ENCODE measurements at regions of chr6 and their contacts with region 1.

Region 1: DNA sequence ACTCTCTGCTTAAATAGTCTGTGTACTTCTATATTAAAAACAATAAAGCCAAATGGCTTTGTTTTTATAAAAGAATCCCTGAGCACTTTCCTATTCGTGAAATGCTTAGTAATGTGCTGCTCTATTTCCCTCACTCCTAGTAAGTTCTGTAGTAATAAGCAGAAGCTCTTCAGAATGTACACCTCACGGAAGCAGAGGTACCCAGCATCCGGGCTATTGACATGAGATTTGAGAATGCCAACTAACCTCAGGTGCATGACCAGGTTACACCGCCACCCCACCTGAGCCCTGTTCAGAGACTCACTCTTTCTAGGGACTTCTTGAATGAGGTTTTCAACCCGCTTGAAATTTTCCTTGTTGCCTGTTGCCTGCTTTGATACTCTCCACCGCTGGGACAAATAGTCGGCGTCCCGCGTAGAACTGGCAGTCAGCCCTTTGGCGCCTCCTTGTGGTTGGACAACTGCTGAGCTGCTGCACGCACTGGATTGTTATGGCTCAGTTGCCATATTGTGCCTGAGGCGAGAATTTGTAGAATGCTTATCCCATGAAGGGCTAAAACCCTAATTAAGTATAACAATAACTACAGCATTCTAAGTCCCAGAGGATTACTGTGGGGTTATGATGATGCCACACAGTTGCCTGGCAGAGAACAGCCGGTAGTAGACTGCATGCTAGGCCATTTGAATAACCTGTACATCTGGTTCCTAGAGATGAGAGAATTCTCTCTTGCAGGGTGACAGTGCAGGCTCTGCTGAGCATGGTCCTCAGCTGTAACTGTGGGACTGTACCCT is 95.4 kb downstream of the KHDC1L start:
- DNase-seq: peak; percentile 93
- H3K4me3 ChIP-seq: no peak overlapping the region
- H3K27ac ChIP-seq: no peak overlapping the region
- H3K4me1 ChIP-seq: peaks cover 25% of the 10 kb centered on the region
- H3K27me3 ChIP-seq: no peaks in the 10 kb centered on the region
- CTCF ChIP-seq: peak; percentile 99

Region 2: GRCh38 chr6:72411872-72412708 is 717.8 kb before region 1 on chr6:
- CTCF ChIA-PET with region 1: interaction called, 4 read pairs
- POLR2A ChIA-PET with region 1: no interaction called
- intact Hi-C with region 1: loop called (anchors 5 kb)
- DNase-seq: peak; percentile 85
- H3K4me3 ChIP-seq: no peak overlapping the region
- H3K27ac ChIP-seq: no peak overlapping the region
- H3K4me1 ChIP-seq: no peaks in the 10 kb centered on the region
- H3K27me3 ChIP-seq: no peaks in the 10 kb centered on the region
- CTCF ChIP-seq: peak; percentile 100

Region 3: GRCh38 chr6:72622094-72622940 is 507.5 kb before region 1 on chr6:
- CTCF ChIA-PET with region 1: interaction called, 5 read pairs
- POLR2A ChIA-PET with region 1: no interaction called
- intact Hi-C with region 1: loop called (anchors 1 kb)
- DNase-seq: peak; percentile 80
- H3K4me3 ChIP-seq: peak overlapping the region; percentile 73
- H3K27ac ChIP-seq: peak overlapping the region; percentile 66
- H3K4me1 ChIP-seq: peaks cover 30% of the 10 kb centered on the region
- H3K27me3 ChIP-seq: no peaks in the 10 kb centered on the region
- CTCF ChIP-seq: peak; percentile 27; the same call in 1 of the 2 replicates

Region 4: DNA sequence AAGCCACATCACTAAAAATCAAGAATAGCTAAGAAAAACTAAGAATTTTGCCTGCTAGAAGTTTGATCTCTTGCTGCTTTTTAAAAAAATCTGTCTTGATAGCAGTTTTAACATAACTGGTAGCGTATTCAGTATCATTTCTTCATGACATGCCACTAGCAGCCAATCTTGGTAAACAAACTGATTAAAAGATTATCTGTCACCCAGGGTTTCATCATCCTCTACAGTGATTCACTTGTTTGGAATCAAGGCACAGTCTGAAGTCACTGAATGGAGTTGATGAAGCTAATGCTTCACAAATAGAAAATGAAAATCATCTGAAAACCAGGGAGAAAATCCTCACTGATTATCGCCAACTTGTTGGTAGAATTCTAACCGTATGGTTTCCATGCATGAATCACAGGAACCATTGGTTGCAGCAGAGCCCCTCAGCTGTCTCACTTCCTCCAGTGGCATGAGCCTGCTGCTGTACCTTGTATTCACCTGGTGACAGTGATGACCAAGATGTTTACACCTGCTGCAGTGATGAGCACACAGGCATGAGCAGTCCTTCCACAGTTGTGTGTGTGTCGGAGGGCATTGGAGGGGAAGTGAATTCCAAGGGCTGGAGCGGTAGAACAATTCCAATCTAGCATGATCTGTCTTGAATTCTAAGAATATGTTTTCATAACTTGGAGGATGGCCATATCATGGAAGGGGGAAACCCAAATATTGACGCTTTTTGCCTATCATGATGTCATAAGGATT is 179.6 kb before region 1 on chr6:
- CTCF ChIA-PET with region 1: no interaction called
- POLR2A ChIA-PET with region 1: no interaction called
- intact Hi-C with region 1: loop called (anchors 10 kb)
- DNase-seq: peak; percentile 83
- H3K4me3 ChIP-seq: no peak overlapping the region
- H3K27ac ChIP-seq: peak overlapping the region; percentile 72
- H3K4me1 ChIP-seq: peaks cover 55% of the 10 kb centered on the region
- H3K27me3 ChIP-seq: no peaks in the 10 kb centered on the region
- CTCF ChIP-seq: no peak

Region 5: DNA sequence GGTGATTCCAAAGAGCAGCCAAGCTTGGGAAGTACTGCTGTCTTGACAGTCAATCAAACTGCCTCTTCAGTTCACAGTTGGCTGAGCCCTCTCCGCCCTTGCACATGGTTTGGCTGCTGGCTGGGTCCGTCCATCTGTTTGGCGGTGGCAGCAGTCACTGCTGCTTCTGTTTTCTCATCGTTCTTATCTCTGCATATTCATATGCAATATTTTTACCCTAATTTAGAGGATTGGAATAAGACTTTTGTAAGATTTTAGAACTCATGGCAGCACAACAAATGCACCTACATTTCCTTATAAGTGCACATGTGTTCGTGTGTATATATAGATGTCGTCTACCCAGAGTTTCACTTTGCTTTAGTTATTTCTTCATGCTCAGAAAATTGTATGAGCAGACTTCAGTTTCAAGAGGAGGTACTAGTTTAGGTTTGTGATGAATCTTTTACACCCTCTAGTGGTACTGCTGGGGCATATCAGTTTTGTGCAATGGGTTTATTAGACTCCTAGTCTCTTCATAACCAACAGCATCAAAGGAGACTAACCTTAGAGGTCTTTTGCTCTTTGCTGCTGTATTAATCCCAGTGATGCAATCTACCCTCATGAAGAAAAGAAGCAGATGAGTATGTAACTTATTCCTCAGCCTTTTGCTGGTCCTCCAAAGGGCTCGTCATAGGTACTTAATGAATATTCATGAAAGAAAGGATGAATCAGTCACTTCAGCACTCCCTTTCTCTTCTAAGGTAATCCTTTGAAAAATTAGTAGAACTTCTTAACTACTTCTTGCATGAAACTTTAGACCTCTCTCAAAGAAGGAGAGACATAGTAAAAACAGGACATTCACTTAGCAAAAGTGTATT is 51.1 kb after region 1 on chr6:
- CTCF ChIA-PET with region 1: no interaction called
- POLR2A ChIA-PET with region 1: no interaction called
- intact Hi-C with region 1: loop called (anchors 5 kb)
- DNase-seq: peak; percentile 86
- H3K4me3 ChIP-seq: peak overlapping the region; percentile 35
- H3K27ac ChIP-seq: peak overlapping the region; percentile 25
- H3K4me1 ChIP-seq: peaks cover 22% of the 10 kb centered on the region
- H3K27me3 ChIP-seq: no peaks in the 10 kb centered on the region
- CTCF ChIP-seq: peak; percentile 93